K562 (cell line): ENCODE measurements at regions of chr21 and their contacts with region 1.

Region 1: DNA sequence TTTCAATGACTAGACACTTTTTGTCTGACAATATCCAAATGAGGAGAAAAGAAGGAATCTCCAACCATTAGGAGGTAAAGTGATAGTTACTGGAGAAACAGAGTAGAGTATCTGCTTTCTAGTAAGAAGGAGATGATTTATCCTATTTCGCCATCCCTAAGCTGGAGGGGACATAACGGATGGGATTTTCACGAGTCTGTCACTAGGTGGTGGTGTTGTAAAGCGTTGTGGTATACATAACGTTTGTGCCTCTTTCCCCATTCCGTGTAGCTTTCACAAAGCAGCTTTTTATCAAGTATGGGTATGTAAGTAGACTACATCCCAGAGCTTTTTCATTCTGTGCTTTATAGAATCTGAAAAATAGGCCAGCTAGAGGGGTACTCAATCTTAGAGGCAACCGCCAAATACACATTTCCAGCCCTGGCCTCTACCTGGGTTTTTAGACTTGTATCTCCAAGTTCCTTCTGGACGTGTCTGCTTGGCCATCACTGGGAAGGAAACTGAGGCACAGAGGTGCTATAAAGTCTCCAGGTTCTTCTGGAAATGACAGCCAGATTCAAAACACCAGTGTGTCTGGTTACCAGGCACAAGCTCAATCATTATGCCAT is 33.3 kb upstream of the FAM3B start:
- DNase-seq: peak; percentile 56 to 68 (median 64)
- ATAC-seq: peak; percentile 98
- H3K4me3 ChIP-seq: no peak overlapping the region
- H3K27ac ChIP-seq: no peak overlapping the region
- H3K4me1 ChIP-seq: no peaks in the 10 kb centered on the region
- H3K27me3 ChIP-seq: peaks cover 3 to 15% of the 10 kb centered on the region in 2 experiments; a peak in 3 of 5 replicates
- CTCF ChIP-seq: peak; percentile 68 to 85 (median 77)
- EP300 ChIP-seq: no peak
- POLR2A ChIP-seq: no peak
- RAD21 ChIP-seq: peak; percentile 80 to 88

Region 2: GRCh38 chr21:41460578-41461527 is 177.5 kb after region 1 on chr21:
- CTCF ChIA-PET with region 1: interaction called, 6 read pairs
- POLR2A ChIA-PET with region 1: no interaction called
- in situ Hi-C with region 1: no loop called
- intact Hi-C with region 1: loop called (anchors 1 kb)
- DNase-seq: peak; percentile 56 to 60 (median 57)
- ATAC-seq: peak; percentile 95
- H3K4me3 ChIP-seq: no peak overlapping the region
- H3K27ac ChIP-seq: no peak overlapping the region
- H3K4me1 ChIP-seq: peaks cover 0 to 3% of the 10 kb centered on the region in 2 experiments; a peak in 1 of 5 replicates
- H3K27me3 ChIP-seq: peaks cover 8 to 23% of the 10 kb centered on the region in 2 experiments; a peak in 3 of 5 replicates
- CTCF ChIP-seq: peak; percentile 61 to 76 (median 69)
- EP300 ChIP-seq: no peak
- POLR2A ChIP-seq: no peak
- RAD21 ChIP-seq: peak; percentile 46 to 67

Region 3: GRCh38 chr21:41777951-41778874 is 494.9 kb after region 1 on chr21:
- CTCF ChIA-PET with region 1: no interaction called
- POLR2A ChIA-PET with region 1: no interaction called
- in situ Hi-C with region 1: no loop called
- intact Hi-C with region 1: loop called (anchors 10 kb)
- DNase-seq: peak; percentile 63 to 73 (median 66)
- ATAC-seq: peak; percentile 91
- H3K4me3 ChIP-seq: no peak overlapping the region
- H3K27ac ChIP-seq: no peak overlapping the region
- H3K4me1 ChIP-seq: peaks cover under 1 to 11% of the 10 kb centered on the region in 2 experiments; a peak in 4 of 5 replicates
- H3K27me3 ChIP-seq: peaks cover 36 to 38% of the 10 kb centered on the region in 2 experiments
- CTCF ChIP-seq: peak; percentile 74 to 79 (median 76)
- EP300 ChIP-seq: no peak
- POLR2A ChIP-seq: no peak
- RAD21 ChIP-seq: peak; percentile 34 to 77